ENCODE measurements at regions of chr10 and their contacts with region 1.

Region 1: GRCh38 chr10:79316671-79317431 is 30.4 kb upstream of the PPIF start:
- DNase-seq: no peak
- H3K4me3 ChIP-seq: no peak overlapping the region
- CTCF ChIP-seq: no peak

Region 2: DNA sequence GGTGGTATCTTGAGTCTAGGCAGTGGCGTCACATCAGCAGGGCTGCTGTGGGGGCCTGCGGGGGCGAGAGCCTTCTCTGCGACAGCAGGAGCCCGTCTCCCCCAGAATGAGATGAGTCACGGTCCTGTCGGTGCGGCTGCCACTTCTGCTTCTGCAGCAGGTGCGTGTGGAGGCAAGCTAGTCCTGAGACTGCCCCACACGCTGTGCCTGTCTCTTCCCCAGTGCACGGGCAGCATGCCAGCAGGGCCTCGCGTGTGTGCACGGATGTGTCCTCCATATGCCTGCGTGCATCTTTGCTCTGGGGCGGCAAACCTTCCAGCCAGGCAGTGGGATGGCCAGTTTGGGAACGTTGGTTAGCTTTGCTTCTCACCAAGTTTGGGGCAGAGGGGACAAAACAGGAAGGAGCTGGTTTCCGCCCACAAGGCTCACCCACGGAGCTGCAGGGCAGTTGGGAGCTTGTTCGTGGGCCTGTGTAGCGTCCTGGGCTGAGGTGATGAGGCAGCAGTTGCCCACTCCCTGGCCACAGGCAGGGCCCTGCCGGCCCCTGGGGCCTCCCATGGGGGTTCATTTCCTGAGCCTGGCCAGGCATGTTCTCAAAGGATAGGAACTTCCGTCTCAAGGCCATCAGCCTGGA is 30.4 kb before region 1 on chr10:
- CTCF ChIA-PET with region 1: no interaction called
- POLR2A ChIA-PET with region 1: no interaction called
- DNase-seq: no peak
- H3K4me3 ChIP-seq: no peak overlapping the region
- CTCF ChIP-seq: no peak

Region 3: DNA sequence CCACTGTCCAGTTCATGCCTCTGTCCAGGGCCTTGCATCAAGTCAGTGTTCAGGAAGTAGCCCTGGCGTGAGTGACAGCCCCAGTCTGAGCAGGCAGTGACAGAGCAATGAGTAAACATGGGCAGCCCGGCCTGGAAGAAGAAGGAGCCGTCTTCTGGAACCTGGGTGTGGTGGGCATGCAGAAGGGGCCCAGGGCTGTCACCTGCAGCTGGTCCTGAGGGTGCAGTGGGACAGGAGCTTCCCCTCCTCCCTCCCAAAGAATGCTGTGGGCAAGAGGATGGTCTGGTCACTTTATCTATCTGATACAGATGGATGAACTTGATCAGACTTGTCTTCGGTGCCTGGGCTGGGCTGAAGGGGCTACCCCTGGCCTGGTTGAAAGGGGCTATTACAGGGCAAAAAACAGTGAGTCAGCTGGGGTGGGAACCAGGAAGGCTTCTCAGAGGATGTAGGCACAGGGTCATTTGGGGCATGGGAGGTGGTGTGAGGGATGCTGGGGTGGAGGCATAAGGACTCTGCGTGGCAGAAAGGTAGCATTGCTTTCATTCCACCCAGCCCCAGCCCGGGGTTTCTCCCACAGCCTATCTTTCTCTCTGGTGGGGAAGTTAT is 12.3 kb before region 1 on chr10:
- CTCF ChIA-PET with region 1: interaction called, 13 read pairs
- POLR2A ChIA-PET with region 1: interaction called, 5 read pairs
- DNase-seq: no peak
- H3K4me3 ChIP-seq: no peak overlapping the region
- CTCF ChIP-seq: no peak

Region 4: GRCh38 chr10:79454259-79454658 is 137.4 kb after region 1 on chr10:
- CTCF ChIA-PET with region 1: no interaction called
- POLR2A ChIA-PET with region 1: no interaction called
- DNase-seq: no peak
- H3K4me3 ChIP-seq: no peak overlapping the region
- CTCF ChIP-seq: no peak